GM12878 (cell line): ENCODE measurements at regions of chr18 and their contacts with region 1.

Region 1: GRCh38 chr18:44130376-44130942 is 550.2 kb upstream of the SETBP1 start:
- DNase-seq: no peak
- ATAC-seq: peak; percentile 82
- H3K4me3 ChIP-seq: no peak overlapping the region
- H3K27ac ChIP-seq: no peak overlapping the region
- H3K4me1 ChIP-seq: no peaks in the 10 kb centered on the region
- H3K27me3 ChIP-seq: no peaks in the 10 kb centered on the region
- CTCF ChIP-seq: peak; percentile 53 to 69 (median 57)
- EP300 ChIP-seq: no peak
- POLR2A ChIP-seq: no peak
- RAD21 ChIP-seq: peak; percentile 76

Region 2: DNA sequence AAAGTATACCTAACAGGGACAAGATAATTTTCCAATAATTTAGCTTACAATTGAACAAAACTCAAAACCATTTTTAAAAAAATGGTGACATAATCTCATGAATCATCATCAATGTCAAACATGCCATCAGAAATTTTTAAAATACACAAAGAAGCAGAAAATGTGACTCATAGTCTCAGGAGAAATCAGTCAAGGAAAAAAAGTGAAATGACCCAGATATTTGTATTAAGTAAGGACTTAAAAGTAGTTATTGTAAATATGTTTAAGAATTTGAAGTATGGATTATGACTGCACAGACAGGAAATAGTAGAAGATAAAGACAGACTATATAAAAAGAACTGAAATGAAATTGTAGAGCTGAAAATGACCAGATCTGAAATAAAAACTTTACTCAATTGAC is 379.3 kb before region 1 on chr18:
- CTCF ChIA-PET with region 1: no interaction called
- POLR2A ChIA-PET with region 1: no interaction called
- RAD21 ChIA-PET with region 1: no interaction called
- SMC1A ChIA-PET with region 1: no interaction called
- in situ Hi-C with region 1: no loop called
- intact Hi-C with region 1: no loop called
- DNase-seq: no peak
- ATAC-seq: no peak
- H3K4me3 ChIP-seq: no peak overlapping the region
- H3K27ac ChIP-seq: no peak overlapping the region
- H3K4me1 ChIP-seq: no peaks in the 10 kb centered on the region
- H3K27me3 ChIP-seq: no peaks in the 10 kb centered on the region
- CTCF ChIP-seq: no peak
- EP300 ChIP-seq: no peak
- POLR2A ChIP-seq: no peak
- RAD21 ChIP-seq: no peak

Region 3: GRCh38 chr18:44119607-44120006 is 10.9 kb before region 1 on chr18:
- CTCF ChIA-PET with region 1: no interaction called
- POLR2A ChIA-PET with region 1: no interaction called
- RAD21 ChIA-PET with region 1: no interaction called
- SMC1A ChIA-PET with region 1: no interaction called
- in situ Hi-C with region 1: no loop called
- intact Hi-C with region 1: no loop called
- DNase-seq: no peak
- ATAC-seq: no peak
- H3K4me3 ChIP-seq: no peak overlapping the region
- H3K27ac ChIP-seq: no peak overlapping the region
- H3K4me1 ChIP-seq: no peaks in the 10 kb centered on the region
- H3K27me3 ChIP-seq: no peaks in the 10 kb centered on the region
- CTCF ChIP-seq: no peak
- EP300 ChIP-seq: no peak
- POLR2A ChIP-seq: no peak
- RAD21 ChIP-seq: no peak

Region 4: DNA sequence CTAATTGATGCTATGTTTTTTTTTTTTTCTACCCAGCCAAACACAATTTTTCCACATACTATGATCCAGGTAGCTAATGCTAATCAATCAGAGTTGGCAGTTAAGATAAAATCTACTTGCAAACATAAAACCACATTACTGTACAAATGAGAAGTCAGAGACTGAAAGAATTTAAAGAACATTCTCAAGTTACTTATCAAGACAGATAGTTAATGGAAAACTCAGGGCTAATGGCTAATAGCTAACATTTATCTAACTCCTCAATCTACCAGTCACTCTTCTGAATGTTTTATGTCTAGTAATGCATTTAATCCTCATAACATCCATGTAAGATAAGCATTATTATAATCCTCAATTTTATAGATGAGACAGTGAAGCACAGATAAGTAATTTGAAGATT is 12.6 kb after region 1 on chr18:
- CTCF ChIA-PET with region 1: interaction called, 17 read pairs
- POLR2A ChIA-PET with region 1: no interaction called
- RAD21 ChIA-PET with region 1: no interaction called
- SMC1A ChIA-PET with region 1: interaction called, 3 read pairs
- in situ Hi-C with region 1: no loop called
- intact Hi-C with region 1: no loop called
- DNase-seq: no peak
- ATAC-seq: no peak
- H3K4me3 ChIP-seq: no peak overlapping the region
- H3K27ac ChIP-seq: no peak overlapping the region
- H3K4me1 ChIP-seq: no peaks in the 10 kb centered on the region
- H3K27me3 ChIP-seq: no peaks in the 10 kb centered on the region
- CTCF ChIP-seq: no peak
- EP300 ChIP-seq: no peak
- POLR2A ChIP-seq: no peak
- RAD21 ChIP-seq: no peak

Region 5: GRCh38 chr18:45828917-45829811 is 1698.7 kb after region 1 on chr18:
- CTCF ChIA-PET with region 1: no interaction called
- POLR2A ChIA-PET with region 1: no interaction called
- RAD21 ChIA-PET with region 1: no interaction called
- SMC1A ChIA-PET with region 1: no interaction called
- in situ Hi-C with region 1: no loop called
- intact Hi-C with region 1: no loop called
- DNase-seq: no peak
- ATAC-seq: no peak
- H3K4me3 ChIP-seq: no peak overlapping the region
- H3K27ac ChIP-seq: no peak overlapping the region
- H3K4me1 ChIP-seq: peaks cover 18% of the 10 kb centered on the region
- H3K27me3 ChIP-seq: no peaks in the 10 kb centered on the region
- CTCF ChIP-seq: no peak
- EP300 ChIP-seq: no peak
- POLR2A ChIP-seq: no peak
- RAD21 ChIP-seq: no peak